B cell (primary cell): ENCODE measurements at regions of chr17 and their contacts with region 1.

Region 1: GRCh38 chr17:38410201-38410600 is 18.1 kb upstream of the ARHGAP23 start:
- DNase-seq: no peak
- ATAC-seq: no peak
- H3K4me3 ChIP-seq: no peak overlapping the region
- H3K4me3 Mint-ChIP-seq: no peak overlapping the region
- H3K27ac ChIP-seq: no peak overlapping the region
- H3K27ac Mint-ChIP-seq: no peak overlapping the region
- H3K4me1 ChIP-seq: peaks cover 2 to 6% of the 10 kb centered on the region in 2 donors
- H3K4me1 Mint-ChIP-seq: no peaks in the 10 kb centered on the region
- H3K27me3 ChIP-seq: peaks cover 0 to 4% (median 0%) of the 10 kb centered on the region in 4 experiments
- H3K27me3 Mint-ChIP-seq: peaks cover 16% of the 10 kb centered on the region
- CTCF ChIP-seq: no peak

Region 2: DNA sequence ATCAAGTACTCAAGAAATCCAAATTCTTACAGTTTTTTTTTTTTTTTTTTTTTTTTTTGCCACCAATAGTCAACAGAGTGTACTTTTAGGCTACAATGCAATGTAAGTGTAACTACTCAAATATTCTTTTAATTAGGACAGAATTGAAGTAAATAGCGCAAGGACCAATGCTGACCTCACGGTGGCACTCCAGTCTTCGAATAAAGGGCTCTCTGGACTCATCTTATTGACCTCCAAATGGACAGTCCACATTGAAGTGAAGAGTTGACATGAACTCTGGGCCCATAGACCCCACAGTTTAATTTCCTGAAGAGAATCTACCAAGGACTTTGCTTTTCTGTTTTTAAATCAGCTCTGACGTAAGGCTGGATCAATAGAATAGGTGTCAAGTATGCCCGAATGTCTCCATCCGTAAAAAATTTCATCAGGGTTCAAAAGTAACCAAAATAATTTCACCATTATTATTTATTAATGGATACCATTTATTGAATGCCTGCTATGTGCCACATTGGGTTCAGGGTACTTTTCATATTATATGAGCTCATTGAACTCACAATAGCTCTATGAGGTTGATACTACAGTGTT is 759.7 kb before region 1 on chr17:
- CTCF ChIA-PET with region 1: no interaction called
- POLR2A ChIA-PET with region 1: no interaction called
- intact Hi-C with region 1: loop called (anchors 5 kb)
- DNase-seq: no peak
- ATAC-seq: no peak
- H3K4me3 ChIP-seq: no peak overlapping the region
- H3K4me3 Mint-ChIP-seq: no peak overlapping the region
- H3K27ac ChIP-seq: no peak overlapping the region
- H3K27ac Mint-ChIP-seq: no peak overlapping the region
- H3K4me1 ChIP-seq: no peaks in the 10 kb centered on the region
- H3K4me1 Mint-ChIP-seq: no peaks in the 10 kb centered on the region
- H3K27me3 ChIP-seq: peaks cover 0 to 38% (median 14%) of the 10 kb centered on the region in 4 experiments
- H3K27me3 Mint-ChIP-seq: peaks cover 57% of the 10 kb centered on the region
- CTCF ChIP-seq: no peak

Region 3: DNA sequence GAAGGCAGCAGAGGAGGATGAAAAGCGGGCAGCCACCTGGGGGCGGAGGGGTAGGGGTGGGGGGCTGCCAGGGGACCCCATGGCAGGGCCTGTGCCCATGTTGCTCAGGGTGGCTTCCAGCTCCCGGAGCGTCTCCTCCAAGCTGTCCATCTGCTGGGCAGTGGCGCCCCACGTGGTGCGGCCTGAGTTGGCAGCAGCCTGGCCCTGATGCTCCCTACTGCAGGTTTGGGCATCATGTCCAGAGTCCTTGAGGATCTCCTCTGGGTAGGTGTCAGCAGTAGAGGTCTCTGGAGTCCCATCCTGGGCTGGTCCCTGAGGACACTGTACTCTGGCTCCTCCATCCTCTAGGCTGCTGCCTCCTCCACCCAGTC is 134.6 kb after region 1 on chr17:
- CTCF ChIA-PET with region 1: no interaction called
- POLR2A ChIA-PET with region 1: no interaction called
- intact Hi-C with region 1: no loop called
- DNase-seq: no peak
- ATAC-seq: no peak
- H3K4me3 ChIP-seq: no peak overlapping the region
- H3K4me3 Mint-ChIP-seq: no peak overlapping the region
- H3K27ac ChIP-seq: no peak overlapping the region
- H3K27ac Mint-ChIP-seq: no peak overlapping the region
- H3K4me1 ChIP-seq: no peaks in the 10 kb centered on the region
- H3K4me1 Mint-ChIP-seq: no peaks in the 10 kb centered on the region
- H3K27me3 ChIP-seq: peaks cover 0 to 8% (median 1%) of the 10 kb centered on the region in 4 experiments
- H3K27me3 Mint-ChIP-seq: peaks cover 27% of the 10 kb centered on the region
- CTCF ChIP-seq: no peak

Region 4: GRCh38 chr17:38591759-38592241 is 181.6 kb after region 1 on chr17:
- CTCF ChIA-PET with region 1: no interaction called
- POLR2A ChIA-PET with region 1: no interaction called
- intact Hi-C with region 1: no loop called
- DNase-seq: no peak
- ATAC-seq: no peak
- H3K4me3 ChIP-seq: no peak overlapping the region
- H3K4me3 Mint-ChIP-seq: no peak overlapping the region
- H3K27ac ChIP-seq: no peak overlapping the region
- H3K27ac Mint-ChIP-seq: no peak overlapping the region
- H3K4me1 ChIP-seq: peaks cover 14 to 22% of the 10 kb centered on the region in 2 donors
- H3K4me1 Mint-ChIP-seq: peaks cover 16% of the 10 kb centered on the region
- H3K27me3 ChIP-seq: peaks cover 0 to 96% (median 18%) of the 10 kb centered on the region in 4 experiments
- H3K27me3 Mint-ChIP-seq: peaks cover 80% of the 10 kb centered on the region
- CTCF ChIP-seq: no peak

Region 5: DNA sequence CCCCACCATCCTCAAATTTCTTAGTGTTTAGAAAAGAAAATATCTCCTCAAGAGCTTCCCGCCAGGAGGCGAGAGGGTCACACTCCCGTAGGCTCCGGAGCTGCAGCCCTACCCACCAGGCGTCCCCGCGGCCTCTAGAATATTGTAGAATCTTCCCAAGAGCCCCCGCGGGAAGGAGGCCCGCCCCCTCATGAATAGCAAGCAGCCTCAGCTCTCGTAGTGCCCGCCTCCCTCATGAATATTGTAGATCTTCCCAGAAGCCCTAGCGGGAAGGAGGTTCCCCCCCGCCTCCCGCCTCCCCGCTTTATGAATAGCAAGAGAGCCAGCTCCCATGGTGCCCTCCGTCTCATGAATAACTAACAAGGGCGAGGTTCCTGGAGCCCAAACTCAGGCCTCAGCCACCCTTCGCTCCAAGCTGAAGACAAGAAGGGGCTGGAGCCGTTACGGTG is 557.1 kb after region 1 on chr17 and contains the start of gene FBXO47:
- CTCF ChIA-PET with region 1: no interaction called
- POLR2A ChIA-PET with region 1: no interaction called
- intact Hi-C with region 1: no loop called
- DNase-seq: peak; percentile 88
- ATAC-seq: peak; percentile 97
- H3K4me3 ChIP-seq: peak within 1 kb of the TSS in 4 of 5 experiments; percentile 30 to 50 (median 38)
- H3K4me3 Mint-ChIP-seq: peak within 1 kb of the TSS; percentile 82
- H3K27ac ChIP-seq: peak within 1 kb of the TSS in 1 of 2 donors; percentile 62
- H3K27ac Mint-ChIP-seq: peak within 1 kb of the TSS; percentile 88
- H3K4me1 ChIP-seq: peaks cover 0 to 13% of the 10 kb centered on the region in 2 donors
- H3K4me1 Mint-ChIP-seq: peaks cover 7% of the 10 kb centered on the region
- H3K27me3 ChIP-seq: no peaks in the 10 kb centered on the region
- H3K27me3 Mint-ChIP-seq: peaks cover 2% of the 10 kb centered on the region
- CTCF ChIP-seq: no peak
- total RNA-seq, gene FBXO47: not detected in 2 replicates